Activated naive CD4-positive, alpha-beta T cell treated with anti-CD3 and anti-CD28 coated beads for 36 hours (primary cell): ENCODE measurements at regions of chr9 and their contacts with region 1.

Region 1: GRCh38 chr9:7536310-7536939 is 263.2 kb downstream of the DMAC1 start:
- DNase-seq: peak; percentile 62
- H3K4me3 Mint-ChIP-seq: no peak overlapping the region
- H3K27ac Mint-ChIP-seq: no peak overlapping the region
- H3K4me1 Mint-ChIP-seq: peaks cover 11% of the 10 kb centered on the region
- H3K27me3 Mint-ChIP-seq: peaks cover 9% of the 10 kb centered on the region

Region 2: GRCh38 chr9:6827439-6827838 is 709.0 kb before region 1 on chr9:
- CTCF ChIA-PET with region 1: interaction called, 7 read pairs
- intact Hi-C with region 1: loop called (anchors 1 kb)
- DNase-seq: peak; percentile 68
- H3K4me3 Mint-ChIP-seq: no peak overlapping the region
- H3K27ac Mint-ChIP-seq: no peak overlapping the region
- H3K4me1 Mint-ChIP-seq: peaks cover 8% of the 10 kb centered on the region
- H3K27me3 Mint-ChIP-seq: no peaks in the 10 kb centered on the region

Region 3: GRCh38 chr9:6907772-6908381 is 628.5 kb before region 1 on chr9:
- CTCF ChIA-PET with region 1: no interaction called
- intact Hi-C with region 1: loop called (anchors 1 kb)
- DNase-seq: no peak
- H3K4me3 Mint-ChIP-seq: no peak overlapping the region
- H3K27ac Mint-ChIP-seq: no peak overlapping the region
- H3K4me1 Mint-ChIP-seq: peaks cover 5% of the 10 kb centered on the region
- H3K27me3 Mint-ChIP-seq: no peaks in the 10 kb centered on the region

Region 4: DNA sequence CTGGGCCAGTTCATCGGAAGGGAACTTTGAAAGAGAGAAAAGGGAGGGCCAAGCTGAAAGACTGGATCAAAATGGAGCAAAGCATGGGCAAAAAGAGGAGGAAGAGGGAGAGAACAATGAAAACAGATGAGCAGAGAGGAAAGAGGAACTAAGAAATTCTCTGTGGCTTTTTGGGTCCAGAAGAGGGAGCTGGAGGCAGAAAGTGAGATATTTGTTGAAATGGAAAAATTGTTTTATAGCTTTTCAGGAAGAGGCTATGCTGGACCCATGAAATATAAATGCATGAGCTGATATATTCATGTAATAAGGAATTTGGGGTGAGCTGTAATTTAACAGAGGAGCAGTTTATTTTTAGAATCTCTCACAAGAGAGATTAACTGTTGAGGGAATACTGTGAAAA is 194.2 kb before region 1 on chr9:
- CTCF ChIA-PET with region 1: no interaction called
- intact Hi-C with region 1: no loop called
- DNase-seq: no peak
- H3K4me3 Mint-ChIP-seq: no peak overlapping the region
- H3K27ac Mint-ChIP-seq: no peak overlapping the region
- H3K4me1 Mint-ChIP-seq: no peaks in the 10 kb centered on the region
- H3K27me3 Mint-ChIP-seq: peaks cover 14% of the 10 kb centered on the region

Region 5: GRCh38 chr9:7402334-7403027 is 133.9 kb before region 1 on chr9:
- CTCF ChIA-PET with region 1: interaction called, 5 read pairs
- intact Hi-C with region 1: loop called (anchors 1 kb)
- DNase-seq: no peak
- H3K4me3 Mint-ChIP-seq: no peak overlapping the region
- H3K27ac Mint-ChIP-seq: no peak overlapping the region
- H3K4me1 Mint-ChIP-seq: peaks cover 6% of the 10 kb centered on the region
- H3K27me3 Mint-ChIP-seq: peaks cover 24% of the 10 kb centered on the region

Region 6: DNA sequence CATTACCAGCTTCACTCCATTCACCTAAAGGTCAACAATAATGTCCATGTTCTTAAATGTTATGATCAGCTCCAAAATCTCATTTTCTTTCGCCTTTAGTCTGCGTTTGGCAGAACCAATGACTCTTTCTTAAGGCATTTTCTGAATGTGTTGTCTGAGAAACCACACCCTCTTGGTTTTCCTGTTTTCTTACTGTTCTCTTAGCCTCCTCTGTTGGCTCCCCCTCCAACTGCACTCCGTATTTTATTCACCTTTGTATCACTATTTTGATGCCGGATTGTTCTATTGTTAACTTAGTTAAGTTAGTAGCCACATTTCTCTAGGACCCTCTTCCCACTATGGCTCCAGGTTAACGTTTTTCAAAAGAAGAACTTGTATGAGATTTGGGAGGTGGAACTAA is 77.5 kb after region 1 on chr9:
- CTCF ChIA-PET with region 1: no interaction called
- intact Hi-C with region 1: no loop called
- DNase-seq: peak; percentile 14
- H3K4me3 Mint-ChIP-seq: peak overlapping the region; percentile 5
- H3K27ac Mint-ChIP-seq: no peak overlapping the region
- H3K4me1 Mint-ChIP-seq: peaks cover 18% of the 10 kb centered on the region
- H3K27me3 Mint-ChIP-seq: no peaks in the 10 kb centered on the region

Region 7: GRCh38 chr9:7653262-7653661 is 116.8 kb after region 1 on chr9:
- CTCF ChIA-PET with region 1: no interaction called
- intact Hi-C with region 1: no loop called
- DNase-seq: no peak
- H3K4me3 Mint-ChIP-seq: no peak overlapping the region
- H3K27ac Mint-ChIP-seq: no peak overlapping the region
- H3K4me1 Mint-ChIP-seq: peaks cover 11% of the 10 kb centered on the region
- H3K27me3 Mint-ChIP-seq: no peaks in the 10 kb centered on the region